Activated B cell treated with CpG ODN at 0.5 μM for 24 hours (primary cell): ENCODE measurements at regions of chr14 and their contacts with region 1.

Region 1: GRCh38 chr14:69695322-69696203 is 71.4 kb upstream of the SRSF5 start:
- DNase-seq: no peak
- ATAC-seq: peak; percentile 45
- H3K4me3 Mint-ChIP-seq: peak overlapping the region; percentile 30
- H3K27ac Mint-ChIP-seq: peak overlapping the region; percentile 85
- H3K4me1 Mint-ChIP-seq: peaks cover 90% of the 10 kb centered on the region
- H3K27me3 Mint-ChIP-seq: no peaks in the 10 kb centered on the region
- CTCF ChIP-seq: no peak

Region 2: GRCh38 chr14:69708586-69709174 is 13.1 kb after region 1 on chr14:
- CTCF ChIA-PET with region 1: interaction called, 3 read pairs
- POLR2A ChIA-PET with region 1: interaction called, 4 read pairs
- intact Hi-C with region 1: loop called (anchors 2 kb)
- DNase-seq: no peak
- ATAC-seq: peak; percentile 66
- H3K4me3 Mint-ChIP-seq: no peak overlapping the region
- H3K27ac Mint-ChIP-seq: peak overlapping the region; percentile 63
- H3K4me1 Mint-ChIP-seq: peaks cover 55% of the 10 kb centered on the region
- H3K27me3 Mint-ChIP-seq: no peaks in the 10 kb centered on the region
- CTCF ChIP-seq: no peak

Region 3: DNA sequence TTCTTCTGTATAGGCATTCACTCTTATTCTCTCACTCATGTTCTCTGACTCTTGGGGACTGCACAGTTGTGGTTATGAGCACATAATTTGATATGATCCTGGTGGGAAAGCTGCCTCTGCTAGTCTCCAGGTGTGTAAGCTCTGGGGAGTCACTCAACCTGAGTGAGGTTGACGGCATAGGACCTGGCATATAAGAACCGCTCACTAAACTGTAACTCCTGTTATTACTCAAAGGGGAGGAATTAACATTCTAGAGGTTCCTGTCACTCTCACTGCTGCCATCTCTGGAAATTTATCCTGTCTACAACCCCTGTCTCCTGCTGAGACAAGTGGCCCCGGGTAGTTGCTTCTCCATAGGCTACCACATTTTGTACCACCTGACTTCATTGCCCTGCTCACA is 85.4 kb after region 1 on chr14:
- CTCF ChIA-PET with region 1: no interaction called
- POLR2A ChIA-PET with region 1: no interaction called
- intact Hi-C with region 1: no loop called
- DNase-seq: no peak
- ATAC-seq: no peak
- H3K4me3 Mint-ChIP-seq: no peak overlapping the region
- H3K27ac Mint-ChIP-seq: peak overlapping the region; percentile 39
- H3K4me1 Mint-ChIP-seq: peaks cover 13% of the 10 kb centered on the region
- H3K27me3 Mint-ChIP-seq: no peaks in the 10 kb centered on the region
- CTCF ChIP-seq: no peak